PC-9 (cell line): ENCODE measurements at regions of chr3 and their contacts with region 1.

Region 1: GRCh38 chr3:195106418-195106906 is 164.5 kb downstream of the XXYLT1 start:
- DNase-seq: peak in 1 of 2 experiments; percentile 72
- H3K4me3 ChIP-seq: no peak overlapping the region; the same call in 1 of the 2 replicates
- H3K27ac ChIP-seq: no peak overlapping the region
- H3K4me1 ChIP-seq: peaks cover 40% of the 10 kb centered on the region
- H3K27me3 ChIP-seq: no peaks in the 10 kb centered on the region
- CTCF ChIP-seq: peak; percentile 100

Region 2: DNA sequence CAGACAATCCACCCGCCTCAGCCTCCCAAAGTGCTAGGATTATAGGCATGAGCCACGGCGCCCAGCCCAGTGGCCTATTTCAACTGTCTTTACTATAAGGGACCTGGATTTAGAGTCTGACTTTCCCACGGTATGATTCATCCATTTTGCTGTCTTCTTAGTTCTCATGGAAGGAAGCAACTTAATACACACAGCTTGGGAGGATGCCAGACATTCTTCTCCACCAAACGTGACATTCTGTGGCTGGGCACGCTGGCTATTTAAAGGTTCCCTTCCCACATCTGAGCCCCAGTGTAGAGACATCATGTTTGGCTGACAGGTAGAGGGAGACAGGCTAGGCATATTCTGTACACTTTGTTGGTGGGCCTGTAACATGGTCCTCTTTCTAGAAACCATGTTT is 394.5 kb before region 1 on chr3:
- CTCF ChIA-PET with region 1: no interaction called
- POLR2A ChIA-PET with region 1: no interaction called
- intact Hi-C with region 1: loop called (anchors 1 kb)
- DNase-seq: peak; percentile 89 to 99
- H3K4me3 ChIP-seq: no peak overlapping the region
- H3K27ac ChIP-seq: peak overlapping the region; percentile 54
- H3K4me1 ChIP-seq: peaks cover 47% of the 10 kb centered on the region
- H3K27me3 ChIP-seq: no peaks in the 10 kb centered on the region
- CTCF ChIP-seq: no peak

Region 3: GRCh38 chr3:194769020-194769643 is 337.3 kb before region 1 on chr3:
- CTCF ChIA-PET with region 1: no interaction called
- POLR2A ChIA-PET with region 1: no interaction called
- intact Hi-C with region 1: loop called (anchors 10 kb)
- DNase-seq: peak; percentile 96 to 97
- H3K4me3 ChIP-seq: peak overlapping the region; percentile 50; the same call in 1 of the 2 replicates
- H3K27ac ChIP-seq: no peak overlapping the region
- H3K4me1 ChIP-seq: peaks cover 26% of the 10 kb centered on the region
- H3K27me3 ChIP-seq: no peaks in the 10 kb centered on the region
- CTCF ChIP-seq: 0 out of 2 replicates have a peak, but pooled peaks have one; percentile 28

Region 4: GRCh38 chr3:194930377-194931204 is 175.9 kb before region 1 on chr3:
- CTCF ChIA-PET with region 1: no interaction called
- POLR2A ChIA-PET with region 1: no interaction called
- intact Hi-C with region 1: loop called (anchors 10 kb)
- DNase-seq: peak; percentile 47 to 85
- H3K4me3 ChIP-seq: no peak overlapping the region
- H3K27ac ChIP-seq: peak overlapping the region; percentile 20
- H3K4me1 ChIP-seq: peaks cover 41% of the 10 kb centered on the region
- H3K27me3 ChIP-seq: no peaks in the 10 kb centered on the region
- CTCF ChIP-seq: no peak

Region 5: DNA sequence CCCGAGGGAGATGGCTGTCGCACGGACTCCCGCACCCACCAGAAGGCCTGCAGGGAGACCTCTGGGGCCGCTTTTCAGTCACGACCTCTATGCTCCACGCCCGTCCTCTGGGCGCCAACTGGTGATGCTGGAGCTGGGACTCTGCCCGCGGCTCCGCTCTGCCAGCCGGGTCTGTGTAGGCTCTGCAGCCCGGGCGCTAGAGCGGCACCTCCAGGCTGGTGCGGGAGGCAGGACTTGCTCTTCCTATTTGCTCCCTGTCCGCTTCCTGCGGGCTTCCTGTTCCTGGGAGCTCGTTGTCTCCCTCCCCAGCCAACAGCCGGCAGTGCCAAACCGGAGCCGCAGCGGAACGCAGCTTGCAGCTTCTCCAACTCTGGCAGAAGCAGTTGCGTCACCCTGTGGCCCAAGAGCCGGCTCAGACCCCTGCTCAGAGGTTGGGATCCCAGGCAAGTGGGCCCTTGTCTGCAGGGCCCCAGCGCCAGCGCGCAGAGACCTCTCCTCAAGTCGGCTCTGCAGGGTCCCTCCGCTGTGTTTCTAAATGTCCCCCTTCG is 121.4 kb before region 1 on chr3:
- CTCF ChIA-PET with region 1: no interaction called
- POLR2A ChIA-PET with region 1: no interaction called
- intact Hi-C with region 1: loop called (anchors 5 kb)
- DNase-seq: no peak
- H3K4me3 ChIP-seq: no peak overlapping the region
- H3K27ac ChIP-seq: no peak overlapping the region
- H3K4me1 ChIP-seq: peaks cover 13% of the 10 kb centered on the region
- H3K27me3 ChIP-seq: no peaks in the 10 kb centered on the region
- CTCF ChIP-seq: no peak

Region 6: DNA sequence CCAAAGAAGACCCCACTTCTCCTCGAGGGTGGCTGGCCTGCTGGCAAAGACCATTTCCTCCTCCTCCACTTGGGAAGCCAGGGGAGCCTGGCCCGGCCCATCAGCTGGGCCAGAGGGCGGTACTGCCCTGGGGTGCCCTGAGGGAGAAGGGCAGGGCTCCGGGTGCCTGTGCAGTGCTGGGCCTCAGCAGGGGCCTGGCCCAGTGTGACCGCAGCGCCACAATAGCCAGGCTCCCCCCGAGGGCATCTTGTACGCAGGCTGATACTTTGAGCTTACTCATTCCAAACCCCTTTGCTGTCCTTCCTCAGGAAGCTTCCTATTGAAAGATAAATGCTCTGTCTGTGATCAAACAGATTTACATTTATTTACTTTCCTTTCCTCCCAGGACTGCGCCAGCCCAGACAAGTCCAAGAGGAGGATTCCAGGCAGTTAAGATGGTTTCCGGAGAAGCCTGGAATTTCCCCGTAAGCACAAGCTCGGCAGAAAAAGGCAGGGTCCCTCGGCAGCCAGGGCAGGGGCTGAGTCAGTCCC is 75.6 kb before region 1 on chr3:
- CTCF ChIA-PET with region 1: interaction called, 3 read pairs
- POLR2A ChIA-PET with region 1: no interaction called
- intact Hi-C with region 1: loop called (anchors 1 kb)
- DNase-seq: peak; percentile 98
- H3K4me3 ChIP-seq: peak overlapping the region; percentile 28; the same call in 1 of the 2 replicates
- H3K27ac ChIP-seq: peak overlapping the region; percentile 83
- H3K4me1 ChIP-seq: peaks cover 53% of the 10 kb centered on the region
- H3K27me3 ChIP-seq: no peaks in the 10 kb centered on the region
- CTCF ChIP-seq: no peak

Region 7: GRCh38 chr3:195221015-195221853 is 114.8 kb after region 1 on chr3:
- CTCF ChIA-PET with region 1: no interaction called
- POLR2A ChIA-PET with region 1: no interaction called
- intact Hi-C with region 1: no loop called
- DNase-seq: no peak
- H3K4me3 ChIP-seq: no peak overlapping the region
- H3K27ac ChIP-seq: no peak overlapping the region
- H3K4me1 ChIP-seq: no peaks in the 10 kb centered on the region
- H3K27me3 ChIP-seq: no peaks in the 10 kb centered on the region
- CTCF ChIP-seq: no peak